ENCODE measurements at regions of chr2 and their contacts with region 1.

Region 1: GRCh38 chr2:190534310-190535120 is at the start of gene NEMP2:
- DNase-seq: peak; percentile 81 to 93
- H3K4me3 ChIP-seq: peak within 1 kb of the TSS; percentile 66 to 90 (median 72)
- H3K27ac ChIP-seq: peak within 1 kb of the TSS; percentile 94 to 98 (median 96)
- H3K4me1 ChIP-seq: peaks cover 10 to 35% (median 27%) of the 10 kb centered on the region in 4 donors
- H3K27me3 ChIP-seq: no peaks in the 10 kb centered on the region
- CTCF ChIP-seq: no peak
- EP300 ChIP-seq: no peak
- POLR2A ChIP-seq: peak in 1 of 4 donors; percentile 34
- total RNA-seq, gene NEMP2: 0.89 to 18.7 (median 14.6) TPM in 3 of 5 donors, not detected in the others

Region 2: DNA sequence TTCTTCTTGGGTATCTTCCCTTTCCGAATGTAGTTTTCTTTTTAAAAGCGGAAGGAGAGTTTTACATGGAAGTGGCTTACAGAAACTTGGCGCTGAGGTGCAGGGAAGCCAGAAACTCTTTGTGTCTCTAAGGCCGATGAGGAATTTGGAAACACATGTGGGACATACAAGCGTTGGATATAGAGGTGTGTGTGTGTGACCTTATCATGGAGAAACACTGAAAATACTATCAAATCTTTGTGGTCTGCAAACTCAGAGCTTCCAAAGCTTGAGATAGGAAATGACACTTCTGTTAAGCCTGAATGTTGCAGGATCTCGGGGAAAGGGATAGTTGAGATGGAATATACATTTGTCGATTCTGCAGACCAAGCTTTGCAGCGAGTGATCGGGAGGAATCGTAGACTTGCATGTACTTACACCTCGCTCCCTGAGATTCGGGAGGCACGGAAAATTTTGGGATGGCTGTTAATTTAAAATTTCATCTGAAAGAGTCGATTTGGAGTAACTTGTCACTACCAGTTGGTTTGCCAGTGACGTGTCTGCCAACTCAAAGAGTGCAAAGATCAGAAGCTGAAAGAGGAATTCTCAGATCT is 115.4 kb after region 1 on chr2:
- intact Hi-C with region 1: loop called (anchors 10 kb)
- DNase-seq: peak in 1 of 2 donors; percentile 60
- H3K4me3 ChIP-seq: peak overlapping the region; percentile 68 to 95 (median 80)
- H3K27ac ChIP-seq: peak overlapping the region; percentile 90 to 95 (median 93)
- H3K4me1 ChIP-seq: peaks cover 8 to 74% (median 38%) of the 10 kb centered on the region in 4 donors
- H3K27me3 ChIP-seq: no peaks in the 10 kb centered on the region
- CTCF ChIP-seq: no peak
- EP300 ChIP-seq: no peak
- POLR2A ChIP-seq: no peak

Measured in stomach (tissue), 19 donors.